ENCODE measurements at regions of chr1 and their contacts with region 1.

Region 1: GRCh38 chr1:155669233-155670162 is 19.1 kb downstream of the YY1AP1 start:
- DNase-seq: no peak
- ATAC-seq: no peak
- H3K4me3 ChIP-seq: no peak overlapping the region
- H3K27ac ChIP-seq: no peak overlapping the region
- H3K4me1 ChIP-seq: no peaks in the 10 kb centered on the region
- H3K27me3 ChIP-seq: no peaks in the 10 kb centered on the region
- CTCF ChIP-seq: no peak

Region 2: GRCh38 chr1:155929057-155929456 is 259.6 kb after region 1 on chr1:
- intact Hi-C with region 1: loop called in 1 of 2 experiments (anchors 10 kb)
- DNase-seq: no peak
- ATAC-seq: no peak
- H3K4me3 ChIP-seq: no peak overlapping the region
- H3K27ac ChIP-seq: no peak overlapping the region
- H3K4me1 ChIP-seq: peaks cover 36% of the 10 kb centered on the region
- H3K27me3 ChIP-seq: no peaks in the 10 kb centered on the region
- CTCF ChIP-seq: no peak

Region 3: DNA sequence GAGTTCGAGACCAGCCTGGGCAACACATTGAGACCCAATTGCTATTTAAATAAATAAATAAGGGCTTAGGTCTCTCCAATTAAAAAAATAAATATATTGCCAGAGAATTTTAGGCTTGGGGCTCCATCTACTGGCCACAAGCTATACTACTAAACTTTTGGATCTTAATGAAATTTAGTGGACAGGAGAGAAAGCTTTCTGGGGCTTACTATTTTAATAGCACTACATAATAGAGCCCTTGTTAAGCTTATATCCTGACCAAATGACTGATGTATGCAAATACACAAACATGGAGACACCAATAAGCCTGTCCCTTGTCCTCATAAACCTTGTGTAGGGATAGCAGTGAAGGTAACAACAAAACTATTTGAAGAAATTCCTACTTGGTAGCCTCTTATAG is 650.2 kb after region 1 on chr1:
- intact Hi-C with region 1: loop called in 1 of 2 experiments (anchors 10 kb)
- DNase-seq: no peak
- ATAC-seq: peak in 1 of 4 donors; percentile 46
- H3K4me3 ChIP-seq: no peak overlapping the region
- H3K27ac ChIP-seq: no peak overlapping the region
- H3K4me1 ChIP-seq: no peaks in the 10 kb centered on the region
- H3K27me3 ChIP-seq: no peaks in the 10 kb centered on the region
- CTCF ChIP-seq: peak; percentile 47

Measured in psoas muscle (tissue), 8 donors.